Heart right ventricle (tissue), 16 donors: ENCODE measurements at regions of chr17 and their contacts with region 1.

Region 1: DNA sequence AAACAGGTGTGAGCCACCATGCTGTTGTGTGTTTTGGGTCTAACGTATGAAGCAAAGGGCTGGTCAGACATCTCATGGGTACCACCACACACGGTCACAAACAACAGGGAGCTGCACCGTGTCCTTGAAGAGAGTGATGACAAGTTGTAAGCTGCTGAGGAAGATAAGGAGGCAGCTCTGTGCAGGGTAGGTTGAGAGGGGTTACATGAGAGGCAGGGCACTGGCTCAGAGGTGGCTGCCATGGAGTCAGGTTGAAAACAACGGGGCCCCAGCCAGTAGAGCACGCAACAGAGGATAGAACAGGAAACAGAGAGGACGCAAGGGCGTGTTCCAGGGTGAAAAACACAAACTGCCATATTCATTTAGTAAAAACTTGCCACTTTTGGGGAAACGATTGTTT is 52.2 kb downstream of the TRARG1 start:
- DNase-seq: peak; percentile 52
- ATAC-seq: peak; percentile 88 to 97 (median 95)
- H3K4me3 ChIP-seq: no peak overlapping the region
- H3K27ac ChIP-seq: no peak overlapping the region
- H3K4me1 ChIP-seq: peaks cover 0 to 18% (median 8%) of the 10 kb centered on the region in 9 donors
- H3K27me3 ChIP-seq: no peaks in the 10 kb centered on the region
- CTCF ChIP-seq: no peak

Region 2: GRCh38 chr17:1122533-1123392 is 208.9 kb before region 1 on chr17:
- intact Hi-C with region 1: loop called in 3 of 10 experiments (anchors 5 to 10 kb)
- DNase-seq: peak; percentile 90
- ATAC-seq: peak; percentile 78 to 91 (median 85)
- H3K4me3 ChIP-seq: no peak overlapping the region
- H3K27ac ChIP-seq: peak overlapping the region in 9 of 10 donors; percentile 34 to 75 (median 59)
- H3K4me1 ChIP-seq: peaks cover 7 to 49% (median 36%) of the 10 kb centered on the region in 9 donors
- H3K27me3 ChIP-seq: no peaks in the 10 kb centered on the region
- CTCF ChIP-seq: peak; percentile 92 to 98 (median 94)

Region 3: DNA sequence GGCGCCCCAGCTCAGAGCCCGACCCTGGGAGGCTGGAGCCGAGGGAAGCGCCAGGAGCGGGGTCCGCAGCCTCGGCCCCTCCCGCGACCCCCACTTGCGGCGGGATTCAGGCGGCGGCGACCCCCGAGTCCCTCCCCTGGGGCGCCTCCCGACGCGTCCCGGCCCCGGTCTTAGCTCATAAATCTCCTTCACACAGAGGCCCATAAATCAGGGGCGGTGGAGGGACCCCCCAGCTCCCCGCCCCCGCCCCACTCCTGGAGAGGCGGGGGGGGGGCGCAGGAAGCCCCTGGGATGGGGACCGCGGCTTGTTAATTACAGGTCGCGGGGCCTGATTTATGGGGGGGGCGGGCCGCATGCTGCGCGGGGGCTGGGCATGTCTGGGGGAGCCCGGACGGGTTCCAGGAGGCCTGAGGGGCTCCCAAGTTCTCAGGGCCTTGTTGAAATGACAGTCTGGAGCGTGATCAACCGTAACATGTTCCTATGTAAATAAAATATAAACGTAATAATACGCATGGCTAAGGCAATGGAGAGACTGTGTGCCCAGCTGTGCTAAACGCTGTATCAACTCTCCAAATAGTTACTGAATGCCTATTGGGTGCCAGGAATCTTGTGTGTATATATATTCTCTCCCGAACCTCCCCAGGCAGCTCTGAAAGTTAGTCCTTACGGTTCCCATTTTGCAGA is 71.5 kb before region 1 on chr17:
- intact Hi-C with region 1: loop called in 5 of 10 experiments (anchors 1 to 5 kb)
- DNase-seq: no peak
- ATAC-seq: peak in 3 of 8 donors; percentile 3 to 15 (median 15)
- H3K4me3 ChIP-seq: peak overlapping the region in 9 of 10 donors; percentile 25 to 58 (median 54)
- H3K27ac ChIP-seq: peak overlapping the region in 1 of 10 donors; percentile 66
- H3K4me1 ChIP-seq: peaks cover 0 to 28% (median 22%) of the 10 kb centered on the region in 9 donors
- H3K27me3 ChIP-seq: peaks cover 0 to 45% (median 0%) of the 10 kb centered on the region in 7 donors
- CTCF ChIP-seq: no peak

Region 4: DNA sequence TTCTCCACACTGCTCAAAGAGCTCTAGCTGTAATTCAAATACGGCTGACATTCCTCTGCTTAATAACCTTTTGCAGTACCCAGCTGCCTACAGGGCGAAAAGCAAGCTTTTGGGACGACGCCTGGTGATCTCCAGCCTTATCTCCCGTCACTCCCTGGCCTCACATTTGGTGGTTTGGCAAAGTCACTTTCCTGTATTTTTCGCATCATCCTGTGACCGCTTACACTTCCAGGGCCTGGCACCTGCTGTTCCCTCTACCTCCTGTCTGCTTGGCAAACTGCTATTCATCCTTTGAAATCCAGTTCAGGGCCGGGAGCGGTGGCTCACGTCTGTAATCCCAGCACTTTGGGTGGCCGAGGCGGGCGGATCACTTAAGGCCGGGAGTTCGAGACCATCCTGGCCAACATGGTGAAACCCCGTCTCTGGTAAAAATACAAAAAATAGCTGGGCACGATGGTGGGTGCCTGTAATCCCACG is 64.2 kb before region 1 on chr17:
- intact Hi-C with region 1: loop called in 1 of 10 experiments (anchors 5 kb)
- DNase-seq: peak in 1 of 2 donors; percentile 34
- ATAC-seq: peak in 7 of 8 donors; percentile 10 to 64 (median 38)
- H3K4me3 ChIP-seq: peak overlapping the region; percentile 54 to 81 (median 72)
- H3K27ac ChIP-seq: peak overlapping the region; percentile 76 to 96 (median 94)
- H3K4me1 ChIP-seq: peaks cover 0 to 26% (median 12%) of the 10 kb centered on the region in 9 donors
- H3K27me3 ChIP-seq: peaks cover 11 to 41% (median 30%) of the 10 kb centered on the region in 7 donors
- CTCF ChIP-seq: no peak

Region 5: GRCh38 chr17:1275962-1276736 is 55.6 kb before region 1 on chr17:
- intact Hi-C with region 1: loop called (anchors 1 to 5 kb)
- DNase-seq: peak; percentile 63 to 76
- ATAC-seq: peak; percentile 43 to 84 (median 70)
- H3K4me3 ChIP-seq: no peak overlapping the region
- H3K27ac ChIP-seq: no peak overlapping the region
- H3K4me1 ChIP-seq: peaks cover 0 to 7% (median 0%) of the 10 kb centered on the region in 9 donors
- H3K27me3 ChIP-seq: peaks cover 0 to 44% (median 38%) of the 10 kb centered on the region in 7 donors
- CTCF ChIP-seq: peak; percentile 67 to 88 (median 82)

Region 6: DNA sequence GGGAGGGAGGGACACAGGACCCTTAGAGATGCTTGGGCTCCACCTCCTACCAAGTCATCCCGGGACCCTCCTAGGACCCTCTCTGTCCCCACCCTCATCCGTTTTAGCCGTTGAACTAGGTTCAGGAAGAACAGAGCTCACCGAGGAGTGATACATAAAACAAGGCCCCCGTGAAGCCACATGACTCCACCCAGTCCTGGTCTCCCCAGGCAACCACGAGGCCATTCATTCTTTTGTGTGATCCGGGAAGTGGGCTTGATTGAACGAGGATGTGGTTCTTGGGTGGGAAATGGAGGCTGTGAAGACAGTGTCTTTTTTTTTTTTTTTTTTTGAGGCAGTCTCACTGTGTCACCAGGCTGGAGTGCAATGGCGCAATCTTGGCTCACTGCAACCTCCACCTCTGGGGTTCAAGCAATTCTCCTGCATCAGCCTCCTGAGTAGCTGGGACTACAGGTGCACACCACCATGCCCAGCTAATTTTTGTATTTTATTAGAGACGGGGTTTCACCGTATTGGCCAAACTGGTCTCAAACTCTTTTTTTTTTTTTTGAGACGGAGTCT is 37.5 kb before region 1 on chr17:
- intact Hi-C with region 1: loop called in 1 of 10 experiments (anchors 5 kb)
- DNase-seq: no peak
- ATAC-seq: peak in 2 of 8 donors; percentile 9 to 29
- H3K4me3 ChIP-seq: no peak overlapping the region
- H3K27ac ChIP-seq: peak overlapping the region in 1 of 10 donors; percentile 18
- H3K4me1 ChIP-seq: peaks cover 0 to 9% (median 0%) of the 10 kb centered on the region in 9 donors
- H3K27me3 ChIP-seq: peaks cover 0 to 31% (median 22%) of the 10 kb centered on the region in 7 donors
- CTCF ChIP-seq: no peak